ENCODE measurements at regions of chr16 and their contacts with region 1.

Region 1: GRCh38 chr16:31073968-31074813 is at the starts of genes ZNF646 and ZNF668:
- DNase-seq: peak; percentile 99
- ATAC-seq: peak; percentile 86
- H3K4me3 ChIP-seq: peak within 1 kb of the TSS; percentile 75 to 97 (median 90)
- H3K27ac ChIP-seq: peak within 1 kb of the TSS; percentile 83
- H3K4me1 ChIP-seq: peaks cover 22% of the 10 kb centered on the region
- H3K27me3 ChIP-seq: no peaks in the 10 kb centered on the region; a peak in 1 of 5 replicates
- CTCF ChIP-seq: no peak; the same call in 1 of the 2 replicates
- EP300 ChIP-seq: peak in 1 of 2 experiments; percentile 34; a peak in 1 of 4 replicates
- POLR2A ChIP-seq: peak; percentile 84 to 90
- RAD21 ChIP-seq: peak; percentile 71
- total RNA-seq, gene ZNF646: 7.8 and 10.9 TPM in 2 replicates
- total RNA-seq, gene ZNF668: 7.5 and 9.8 TPM in 2 replicates

Region 2: DNA sequence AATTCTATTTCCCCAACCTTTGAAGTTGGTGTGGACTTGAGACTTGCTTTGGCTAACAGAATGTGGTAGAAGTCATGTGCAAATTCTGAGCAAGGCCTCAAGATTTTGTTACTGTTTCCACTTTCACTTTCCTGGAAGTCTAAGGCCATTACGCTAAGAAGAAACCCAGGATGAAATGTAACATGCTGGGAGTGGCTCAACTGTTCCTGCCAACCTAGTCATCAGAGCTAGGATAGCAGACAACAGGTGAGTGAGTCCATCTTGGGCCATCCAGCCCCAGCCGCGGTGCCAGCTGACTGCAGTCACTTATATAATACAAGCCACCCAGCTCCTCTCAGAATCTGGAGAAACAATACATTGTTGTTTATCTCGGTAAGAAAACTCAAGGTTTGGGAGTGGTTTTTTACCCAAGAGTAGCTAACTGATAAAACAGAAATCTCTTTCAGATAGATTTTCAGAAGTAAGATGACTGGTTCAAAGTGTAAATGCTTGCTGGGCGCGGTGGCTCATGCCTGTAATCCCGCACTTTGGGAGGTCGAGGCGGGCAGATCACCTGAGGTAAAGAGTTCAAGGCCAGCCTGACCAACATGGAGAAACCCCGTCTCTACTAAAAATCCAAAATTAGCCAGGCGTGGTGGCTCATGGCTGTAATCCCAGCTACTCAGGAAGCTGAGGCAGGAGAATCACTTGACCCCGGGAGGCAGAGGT is 51.5 kb before region 1 on chr16:
- CTCF ChIA-PET with region 1: no interaction called
- POLR2A ChIA-PET with region 1: interaction called, 12 read pairs
- in situ Hi-C with region 1: no loop called
- intact Hi-C with region 1: loop called (anchors 2 kb)
- DNase-seq: peak; percentile 30
- ATAC-seq: peak; percentile 21; the same call in 2 of the 3 replicates
- H3K4me3 ChIP-seq: peak overlapping the region in 2 of 3 experiments; percentile 19 to 43; a peak in 3 of 6 replicates
- H3K27ac ChIP-seq: peak overlapping the region; percentile 19
- H3K4me1 ChIP-seq: peaks cover 51% of the 10 kb centered on the region
- H3K27me3 ChIP-seq: peaks cover 0 to 2% of the 10 kb centered on the region in 2 experiments; a peak in 1 of 5 replicates
- CTCF ChIP-seq: no peak
- EP300 ChIP-seq: no peak
- POLR2A ChIP-seq: no peak
- RAD21 ChIP-seq: no peak

Region 3: DNA sequence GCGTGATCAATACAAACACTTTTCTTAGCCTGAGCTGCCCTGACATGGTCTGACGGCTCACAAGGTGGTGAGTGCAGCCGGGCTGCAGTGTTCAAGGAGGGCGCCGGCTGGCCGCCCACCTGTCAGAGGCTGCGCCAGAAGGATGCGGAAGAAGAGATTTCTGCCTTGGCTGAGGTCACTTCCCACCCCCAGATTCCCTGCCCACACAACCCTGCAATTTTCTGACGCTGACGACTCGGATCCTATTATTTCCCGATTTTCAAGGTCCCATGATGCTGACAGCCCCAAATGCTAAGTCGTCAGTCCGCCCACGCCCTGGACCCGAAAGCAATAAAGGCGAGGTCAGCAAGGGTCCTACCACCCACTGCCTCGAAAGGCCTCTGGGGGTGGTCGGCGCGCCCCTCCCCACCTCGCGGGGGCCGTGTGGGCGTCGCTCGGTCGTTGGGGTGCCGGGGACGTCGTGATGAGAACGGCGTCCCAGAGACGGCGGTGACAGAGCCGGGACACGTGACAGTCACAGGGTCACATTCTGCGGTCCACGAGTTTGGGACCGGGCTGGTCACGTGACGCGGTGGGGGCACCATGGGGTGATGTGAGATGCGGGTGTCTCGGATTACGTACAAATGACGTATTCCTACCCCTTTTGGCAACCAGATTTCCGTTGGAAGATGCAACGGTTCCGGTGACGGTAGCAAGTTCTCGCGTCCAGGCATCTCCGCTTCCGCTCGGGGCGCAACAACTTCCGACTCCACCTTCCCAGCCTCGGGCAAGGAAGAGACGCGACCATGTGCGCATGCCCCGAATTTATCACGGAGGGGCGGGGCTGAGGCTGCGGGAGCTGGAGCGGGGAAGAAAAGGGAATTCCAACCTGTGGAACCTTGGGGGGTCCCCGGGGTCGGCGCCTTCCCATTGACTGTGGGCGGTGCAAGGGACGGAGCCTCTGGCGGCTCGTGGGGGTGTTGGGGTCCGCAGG is 41.2 kb before region 1 on chr16 and contains the start of gene STX4:
- CTCF ChIA-PET with region 1: no interaction called
- POLR2A ChIA-PET with region 1: interaction called, 29 read pairs
- in situ Hi-C with region 1: loop called (anchors 5 kb)
- intact Hi-C with region 1: loop called (anchors 2 kb)
- DNase-seq: peak; percentile 94
- ATAC-seq: peak; percentile 88
- H3K4me3 ChIP-seq: peak within 1 kb of the TSS; percentile 86 to 99 (median 94)
- H3K27ac ChIP-seq: peak within 1 kb of the TSS; percentile 82
- H3K4me1 ChIP-seq: peaks cover 39% of the 10 kb centered on the region
- H3K27me3 ChIP-seq: no peaks in the 10 kb centered on the region; a peak in 1 of 5 replicates
- CTCF ChIP-seq: peak; percentile 16; the same call in 1 of the 2 replicates
- EP300 ChIP-seq: no peak
- POLR2A ChIP-seq: peak; percentile 60 to 75; a peak in 2 of 4 replicates
- RAD21 ChIP-seq: no peak
- total RNA-seq, gene STX4: 29.2 and 31.3 TPM in 2 replicates

Region 4: GRCh38 chr16:31084616-31085260 is 10.5 kb after region 1 on chr16:
- CTCF ChIA-PET with region 1: no interaction called
- POLR2A ChIA-PET with region 1: interaction called, 17 read pairs
- in situ Hi-C with region 1: no loop called
- intact Hi-C with region 1: no loop called
- DNase-seq: no peak
- ATAC-seq: peak; percentile 9
- H3K4me3 ChIP-seq: no peak overlapping the region
- H3K27ac ChIP-seq: no peak overlapping the region
- H3K4me1 ChIP-seq: no peaks in the 10 kb centered on the region
- H3K27me3 ChIP-seq: no peaks in the 10 kb centered on the region
- CTCF ChIP-seq: no peak
- EP300 ChIP-seq: no peak
- POLR2A ChIP-seq: peak in 1 of 2 experiments; percentile 34; a peak in 1 of 4 replicates
- RAD21 ChIP-seq: no peak

Region 5: DNA sequence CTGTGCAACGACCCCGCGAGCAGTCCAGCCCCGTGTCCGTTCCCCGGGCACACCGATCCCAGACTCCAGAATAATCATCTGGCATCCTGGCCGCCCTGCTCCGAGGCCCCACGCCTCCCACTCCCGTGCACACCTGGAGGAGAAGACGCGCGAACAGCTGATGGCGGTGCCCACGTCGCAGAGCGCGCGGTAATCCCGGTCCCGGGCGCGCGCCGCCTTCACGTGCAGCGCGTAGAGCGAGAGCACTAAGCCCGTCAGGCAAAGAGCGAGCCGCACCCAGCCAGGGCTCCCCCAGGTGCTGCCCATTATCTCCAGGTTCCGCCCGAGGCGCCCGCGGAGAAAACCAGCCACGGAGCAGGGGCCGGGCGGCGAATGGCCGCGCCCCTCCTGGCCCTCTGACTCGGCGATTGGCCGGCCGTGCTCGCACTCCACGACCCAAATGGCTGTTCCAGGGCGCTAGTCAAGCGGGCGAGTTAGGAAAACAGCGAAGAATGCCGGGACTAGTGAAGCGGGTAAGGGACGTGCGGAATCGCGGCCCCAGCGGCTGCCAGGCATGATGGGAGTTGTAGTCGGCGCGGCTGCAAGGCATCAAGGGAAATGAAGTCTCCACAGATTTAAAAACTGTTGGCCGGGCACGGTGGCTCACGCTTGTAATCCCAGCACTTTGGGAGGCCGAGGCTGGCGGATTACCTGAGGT is 20.4 kb after region 1 on chr16 and contains the start of gene VKORC1:
- CTCF ChIA-PET with region 1: no interaction called
- POLR2A ChIA-PET with region 1: interaction called, 49 read pairs
- in situ Hi-C with region 1: no loop called
- intact Hi-C with region 1: loop called (anchors 1 kb)
- DNase-seq: peak; percentile 98
- ATAC-seq: peak; percentile 95
- H3K4me3 ChIP-seq: peak within 1 kb of the TSS; percentile 80 to 100 (median 82)
- H3K27ac ChIP-seq: peak within 1 kb of the TSS; percentile 84
- H3K4me1 ChIP-seq: peaks cover 27% of the 10 kb centered on the region
- H3K27me3 ChIP-seq: no peaks in the 10 kb centered on the region; a peak in 1 of 5 replicates
- CTCF ChIP-seq: peak; percentile 44
- EP300 ChIP-seq: peak in 1 of 2 experiments; percentile 44; a peak in 1 of 4 replicates
- POLR2A ChIP-seq: peak; percentile 84 to 90
- RAD21 ChIP-seq: peak; percentile 32; the same call in 1 of the 2 replicates
- total RNA-seq, gene VKORC1: 92.1 and 141 TPM in 2 replicates

Region 6: GRCh38 chr16:31142109-31143010 is 68.2 kb after region 1 on chr16:
- CTCF ChIA-PET with region 1: no interaction called
- POLR2A ChIA-PET with region 1: interaction called, 41 read pairs
- in situ Hi-C with region 1: no loop called
- intact Hi-C with region 1: loop called (anchors 1 kb)
- DNase-seq: peak; percentile 98
- ATAC-seq: peak; percentile 74
- H3K4me3 ChIP-seq: peak overlapping the region; percentile 39 to 77 (median 64)
- H3K27ac ChIP-seq: peak overlapping the region; percentile 80
- H3K4me1 ChIP-seq: peaks cover 65% of the 10 kb centered on the region
- H3K27me3 ChIP-seq: peaks cover 0 to 14% of the 10 kb centered on the region in 2 experiments; a peak in 3 of 5 replicates
- CTCF ChIP-seq: peak; percentile 98
- EP300 ChIP-seq: peak; percentile 26 to 27; a peak in 1 of 4 replicates
- POLR2A ChIP-seq: no peak
- RAD21 ChIP-seq: peak; percentile 99

Region 7: DNA sequence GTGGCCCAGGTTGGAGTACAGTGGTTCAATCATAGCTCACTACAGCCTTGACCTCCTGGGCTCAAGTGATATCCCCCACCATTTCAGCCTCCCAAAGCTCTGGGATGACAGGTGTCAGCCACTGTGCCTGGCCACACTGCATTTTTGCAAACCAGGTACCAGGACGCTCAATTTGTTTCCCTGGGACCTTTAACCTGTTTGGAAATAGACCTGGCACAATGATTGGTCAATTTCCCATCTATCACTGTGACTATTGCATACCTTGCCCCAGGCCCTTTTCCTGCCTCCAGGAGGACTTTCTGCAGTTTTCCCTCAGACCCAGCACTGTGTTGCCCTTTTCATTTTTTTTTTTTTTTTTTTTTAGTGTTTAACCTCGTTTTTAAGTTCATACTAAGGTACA is 94.7 kb after region 1 on chr16:
- CTCF ChIA-PET with region 1: no interaction called
- POLR2A ChIA-PET with region 1: no interaction called
- in situ Hi-C with region 1: no loop called
- intact Hi-C with region 1: no loop called
- DNase-seq: peak; percentile 58
- ATAC-seq: peak; percentile 78
- H3K4me3 ChIP-seq: no peak overlapping the region
- H3K27ac ChIP-seq: peak overlapping the region; percentile 26
- H3K4me1 ChIP-seq: peaks cover 48% of the 10 kb centered on the region
- H3K27me3 ChIP-seq: 0 out of 5 replicates have a peak, but pooled peaks cover 0 to 5% of the 10 kb centered on the region in 2 experiments
- CTCF ChIP-seq: no peak
- EP300 ChIP-seq: no peak
- POLR2A ChIP-seq: no peak
- RAD21 ChIP-seq: no peak

Region 8: DNA sequence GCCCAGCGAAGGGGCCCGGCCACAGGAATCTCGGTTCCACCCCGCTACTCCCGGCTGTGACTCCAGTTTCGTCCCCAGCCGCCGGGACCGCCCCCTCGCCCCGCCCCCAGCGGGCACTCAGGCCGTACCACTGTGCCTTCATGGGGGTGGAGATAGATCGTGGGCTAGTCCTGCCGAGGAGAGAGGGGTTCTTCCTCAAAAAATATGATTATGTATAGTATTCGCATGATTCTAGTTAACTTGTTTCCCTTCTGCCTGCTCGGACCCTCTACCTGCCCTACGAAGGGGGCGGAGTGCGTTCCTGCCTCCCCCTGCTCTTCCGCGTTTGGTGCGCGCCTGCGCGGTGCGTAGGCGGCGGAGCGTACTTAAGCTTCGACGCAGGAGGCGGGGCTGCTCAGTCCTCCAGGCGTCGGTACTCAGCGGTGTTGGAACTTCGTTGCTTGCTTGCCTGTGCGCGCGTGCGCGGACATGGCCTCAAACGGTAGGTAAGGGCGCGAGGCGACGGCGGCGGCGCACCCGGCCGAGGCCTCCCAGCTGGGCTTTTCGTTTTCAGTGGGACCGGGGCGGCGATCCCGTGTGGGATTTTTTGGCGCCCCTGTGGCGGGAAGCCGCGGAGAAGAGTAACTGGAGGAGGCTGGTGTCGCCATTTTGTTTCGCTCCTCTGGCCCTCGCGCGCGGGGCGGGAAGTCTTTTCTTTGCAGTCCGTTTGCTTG is 105.7 kb after region 1 on chr16 and contains the start of gene FUS:
- CTCF ChIA-PET with region 1: no interaction called
- POLR2A ChIA-PET with region 1: interaction called, 20 read pairs
- in situ Hi-C with region 1: no loop called
- intact Hi-C with region 1: no loop called
- DNase-seq: peak; percentile 84
- ATAC-seq: peak; percentile 74
- H3K4me3 ChIP-seq: peak within 1 kb of the TSS; percentile 90 to 93 (median 93)
- H3K27ac ChIP-seq: peak within 1 kb of the TSS; percentile 94
- H3K4me1 ChIP-seq: peaks cover 50% of the 10 kb centered on the region
- H3K27me3 ChIP-seq: no peaks in the 10 kb centered on the region; a peak in 1 of 5 replicates
- CTCF ChIP-seq: peak; percentile 4
- EP300 ChIP-seq: peak in 1 of 2 experiments; percentile 28; a peak in 1 of 4 replicates
- POLR2A ChIP-seq: peak; percentile 99 to 100
- RAD21 ChIP-seq: 0 out of 2 replicates have a peak, but pooled peaks have one; percentile 27
- total RNA-seq, gene FUS: 64.8 and 68.1 TPM in 2 replicates